Naive thymus-derived CD4-positive, alpha-beta T cell (primary cell): ENCODE measurements at regions of chr16 and their contacts with region 1.

Region 1: GRCh38 chr16:1610276-1611017 is 1.4 kb downstream of the IFT140 start:
- DNase-seq: peak; percentile 85 to 95 (median 91)
- ATAC-seq: peak; percentile 58
- H3K4me3 ChIP-seq: peak overlapping the region; percentile 60
- H3K4me3 Mint-ChIP-seq: peak overlapping the region; percentile 70 to 95 (median 84)
- H3K27ac ChIP-seq: peak overlapping the region; percentile 75
- H3K27ac Mint-ChIP-seq: peak overlapping the region; percentile 78 to 99 (median 97)
- H3K4me1 ChIP-seq: peaks cover 17 to 34% of the 10 kb centered on the region in 2 donors
- H3K4me1 Mint-ChIP-seq: peaks cover 13 to 30% (median 24%) of the 10 kb centered on the region in 7 donors
- H3K27me3 ChIP-seq: no peaks in the 10 kb centered on the region
- H3K27me3 Mint-ChIP-seq: peaks cover 0 to 4% (median 0%) of the 10 kb centered on the region in 5 donors

Region 2: DNA sequence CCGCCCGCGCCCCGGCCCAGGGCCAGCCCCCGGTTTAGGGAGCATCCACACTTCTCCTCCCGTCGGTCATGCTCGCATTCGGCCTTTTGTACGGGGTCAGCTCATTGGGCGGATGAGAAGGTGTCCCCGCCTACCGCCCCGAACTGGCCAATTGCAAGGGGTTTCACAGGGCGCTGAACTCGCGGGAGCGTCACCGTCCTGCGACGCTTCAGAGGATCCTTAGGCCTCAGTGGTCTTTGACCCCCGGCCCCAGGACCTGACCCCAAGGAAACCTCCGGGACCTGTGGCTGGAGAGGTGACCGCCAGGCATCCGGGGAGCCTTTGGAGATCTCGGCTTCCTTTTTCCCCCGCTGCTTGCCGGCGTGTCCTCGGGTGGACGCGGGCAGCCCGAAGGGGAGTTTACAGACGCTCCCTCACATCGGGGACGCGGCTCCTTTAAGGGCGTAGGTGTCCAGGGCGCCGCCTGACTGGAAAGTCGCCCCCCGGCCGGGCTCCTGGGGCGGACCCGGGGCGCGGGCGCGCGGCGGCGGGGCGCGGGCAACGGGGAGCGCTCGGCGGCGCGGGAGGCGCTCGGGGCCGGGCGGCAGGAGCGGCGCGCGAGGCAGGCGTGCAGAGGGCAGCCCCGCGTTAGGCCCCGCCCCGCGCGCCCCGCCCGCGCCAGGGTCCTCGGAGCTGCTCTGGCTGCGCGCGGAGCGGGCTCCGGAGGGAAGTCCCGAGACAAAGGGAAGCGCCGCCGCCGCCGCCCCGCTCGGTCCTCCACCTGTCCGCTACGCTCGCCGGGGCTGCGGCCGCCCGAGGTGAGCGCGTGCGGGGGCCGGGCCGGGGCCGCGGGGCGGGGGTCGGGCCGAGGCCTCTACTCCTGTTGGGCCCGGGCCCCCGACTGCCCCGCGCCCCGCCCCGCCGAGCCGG is 301.2 kb before region 1 on chr16 and contains the start of gene UBE2I:
- CTCF ChIA-PET with region 1: no interaction called
- POLR2A ChIA-PET with region 1: no interaction called
- intact Hi-C with region 1: loop called in 1 of 2 experiments (anchors 1 kb)
- DNase-seq: peak; percentile 95 to 100 (median 99)
- ATAC-seq: peak; percentile 85
- H3K4me3 ChIP-seq: peak within 1 kb of the TSS; percentile 95
- H3K4me3 Mint-ChIP-seq: peak within 1 kb of the TSS; percentile 92 to 100 (median 98)
- H3K27ac ChIP-seq: peak within 1 kb of the TSS; percentile 99
- H3K27ac Mint-ChIP-seq: peak within 1 kb of the TSS; percentile 97 to 100 (median 99)
- H3K4me1 ChIP-seq: peaks cover 27 to 33% of the 10 kb centered on the region in 2 donors
- H3K4me1 Mint-ChIP-seq: peaks cover 15 to 56% (median 34%) of the 10 kb centered on the region in 7 donors
- H3K27me3 ChIP-seq: no peaks in the 10 kb centered on the region
- H3K27me3 Mint-ChIP-seq: no peaks in the 10 kb centered on the region
- total RNA-seq, gene UBE2I: 159 to 277 (median 203) TPM

Region 3: GRCh38 chr16:1458336-1458976 is 152.0 kb before region 1 on chr16:
- CTCF ChIA-PET with region 1: no interaction called
- POLR2A ChIA-PET with region 1: no interaction called
- intact Hi-C with region 1: no loop called
- DNase-seq: peak in 1 of 9 donors; percentile 32
- ATAC-seq: peak; percentile 40
- H3K4me3 ChIP-seq: no peak overlapping the region
- H3K4me3 Mint-ChIP-seq: no peak overlapping the region
- H3K27ac ChIP-seq: no peak overlapping the region
- H3K27ac Mint-ChIP-seq: peak overlapping the region in 1 of 9 donors; percentile 32
- H3K4me1 ChIP-seq: no peaks in the 10 kb centered on the region
- H3K4me1 Mint-ChIP-seq: peaks cover 0 to 6% (median 0%) of the 10 kb centered on the region in 7 donors
- H3K27me3 ChIP-seq: no peaks in the 10 kb centered on the region
- H3K27me3 Mint-ChIP-seq: no peaks in the 10 kb centered on the region

Region 4: GRCh38 chr16:1474796-1475551 is 135.5 kb before region 1 on chr16 and contains the start of gene CLCN7:
- CTCF ChIA-PET with region 1: no interaction called
- POLR2A ChIA-PET with region 1: interaction called, 6 read pairs
- intact Hi-C with region 1: loop called (anchors 1 to 2 kb)
- DNase-seq: peak; percentile 79 to 95 (median 84)
- ATAC-seq: peak; percentile 91
- H3K4me3 ChIP-seq: peak within 1 kb of the TSS; percentile 67
- H3K4me3 Mint-ChIP-seq: peak within 1 kb of the TSS; percentile 80 to 90 (median 85)
- H3K27ac ChIP-seq: peak within 1 kb of the TSS; percentile 100
- H3K27ac Mint-ChIP-seq: peak within 1 kb of the TSS; percentile 77 to 95 (median 88)
- H3K4me1 ChIP-seq: peaks cover 13 to 20% of the 10 kb centered on the region in 2 donors
- H3K4me1 Mint-ChIP-seq: peaks cover 18 to 52% (median 42%) of the 10 kb centered on the region in 7 donors
- H3K27me3 ChIP-seq: no peaks in the 10 kb centered on the region
- H3K27me3 Mint-ChIP-seq: no peaks in the 10 kb centered on the region
- total RNA-seq, gene CLCN7: 74.8 to 140 (median 115) TPM

Region 5: GRCh38 chr16:1559446-1559975 is 50.9 kb before region 1 on chr16:
- CTCF ChIA-PET with region 1: interaction called, 3 read pairs
- POLR2A ChIA-PET with region 1: no interaction called
- intact Hi-C with region 1: loop called in 1 of 2 experiments (anchors 2 kb)
- DNase-seq: peak in 7 of 9 donors; percentile 34 to 65 (median 50)
- ATAC-seq: peak; percentile 77
- H3K4me3 ChIP-seq: no peak overlapping the region
- H3K4me3 Mint-ChIP-seq: peak overlapping the region; percentile 12 to 85 (median 68)
- H3K27ac ChIP-seq: peak overlapping the region; percentile 57
- H3K27ac Mint-ChIP-seq: peak overlapping the region; percentile 39 to 91 (median 84)
- H3K4me1 ChIP-seq: peaks cover 20 to 45% of the 10 kb centered on the region in 2 donors
- H3K4me1 Mint-ChIP-seq: peaks cover 19 to 50% (median 42%) of the 10 kb centered on the region in 7 donors
- H3K27me3 ChIP-seq: no peaks in the 10 kb centered on the region
- H3K27me3 Mint-ChIP-seq: no peaks in the 10 kb centered on the region

Region 6: GRCh38 chr16:1705688-1706385 is 95.4 kb after region 1 on chr16 and contains the start of gene MAPK8IP3:
- CTCF ChIA-PET with region 1: no interaction called
- POLR2A ChIA-PET with region 1: interaction called, 13 read pairs
- intact Hi-C with region 1: loop called (anchors 1 to 2 kb)
- DNase-seq: peak; percentile 85 to 100 (median 98)
- ATAC-seq: peak; percentile 93
- H3K4me3 ChIP-seq: peak within 1 kb of the TSS; percentile 98
- H3K4me3 Mint-ChIP-seq: peak within 1 kb of the TSS; percentile 95 to 100 (median 98)
- H3K27ac ChIP-seq: peak within 1 kb of the TSS; percentile 96
- H3K27ac Mint-ChIP-seq: peak within 1 kb of the TSS; percentile 95 to 99 (median 97)
- H3K4me1 ChIP-seq: peaks cover 18 to 25% of the 10 kb centered on the region in 2 donors
- H3K4me1 Mint-ChIP-seq: peaks cover 0 to 48% (median 32%) of the 10 kb centered on the region in 7 donors
- H3K27me3 ChIP-seq: no peaks in the 10 kb centered on the region
- H3K27me3 Mint-ChIP-seq: no peaks in the 10 kb centered on the region
- total RNA-seq, gene MAPK8IP3: 112 to 299 (median 272) TPM

Region 7: GRCh38 chr16:1763521-1764511 is 153.4 kb after region 1 on chr16:
- CTCF ChIA-PET with region 1: no interaction called
- POLR2A ChIA-PET with region 1: no interaction called
- intact Hi-C with region 1: no loop called
- DNase-seq: no peak
- ATAC-seq: no peak
- H3K4me3 ChIP-seq: no peak overlapping the region
- H3K4me3 Mint-ChIP-seq: no peak overlapping the region
- H3K27ac ChIP-seq: no peak overlapping the region
- H3K27ac Mint-ChIP-seq: no peak overlapping the region
- H3K4me1 ChIP-seq: no peaks in the 10 kb centered on the region
- H3K4me1 Mint-ChIP-seq: peaks cover 0 to 5% (median 0%) of the 10 kb centered on the region in 7 donors
- H3K27me3 ChIP-seq: no peaks in the 10 kb centered on the region
- H3K27me3 Mint-ChIP-seq: no peaks in the 10 kb centered on the region

Region 8: DNA sequence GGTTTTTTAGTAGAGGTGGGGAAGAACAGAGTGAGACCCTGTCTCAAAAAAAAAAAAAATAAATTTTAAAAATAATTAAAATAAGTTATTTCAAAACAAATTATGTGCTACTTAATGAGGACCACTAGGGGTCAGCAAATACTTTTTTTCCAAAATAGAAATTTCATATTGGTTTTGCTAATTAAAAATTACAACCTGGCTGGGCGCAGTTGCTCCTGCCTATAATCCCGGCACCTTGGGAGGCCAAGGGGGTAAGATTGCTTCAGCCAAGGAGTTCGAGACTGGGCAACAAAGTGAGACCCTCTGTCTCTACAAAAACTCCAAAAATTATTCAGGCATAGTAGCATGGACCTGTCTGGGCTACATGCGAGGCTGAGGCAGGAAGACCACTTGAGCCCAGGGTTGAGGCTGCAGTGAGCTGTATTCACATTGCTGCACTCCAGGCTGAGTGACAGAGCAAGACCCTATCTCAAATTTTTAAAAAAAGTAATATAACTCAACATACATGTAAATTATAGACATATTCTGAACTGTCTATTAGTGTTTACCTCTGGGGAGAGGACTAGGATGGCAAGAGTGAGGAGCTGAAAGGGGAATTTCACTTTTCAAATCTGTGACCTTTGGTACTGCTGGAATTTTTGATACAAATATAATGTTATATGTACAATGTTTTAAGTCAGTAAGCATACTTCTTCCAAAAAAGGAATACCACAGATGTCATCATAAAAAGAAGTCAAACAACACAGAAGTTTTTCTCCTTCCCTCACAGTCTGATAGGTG is 253.4 kb after region 1 on chr16:
- CTCF ChIA-PET with region 1: no interaction called
- POLR2A ChIA-PET with region 1: no interaction called
- intact Hi-C with region 1: no loop called
- DNase-seq: peak in 6 of 9 donors; percentile 21 to 43 (median 35)
- ATAC-seq: no peak
- H3K4me3 ChIP-seq: no peak overlapping the region
- H3K4me3 Mint-ChIP-seq: no peak overlapping the region
- H3K27ac ChIP-seq: no peak overlapping the region
- H3K27ac Mint-ChIP-seq: peak overlapping the region in 1 of 9 donors; percentile 14
- H3K4me1 ChIP-seq: no peaks in the 10 kb centered on the region
- H3K4me1 Mint-ChIP-seq: no peaks in the 10 kb centered on the region
- H3K27me3 ChIP-seq: no peaks in the 10 kb centered on the region
- H3K27me3 Mint-ChIP-seq: peaks cover 0 to 44% (median 9%) of the 10 kb centered on the region in 5 donors

Region 9: GRCh38 chr16:1942810-1943726 is 332.6 kb after region 1 on chr16 and contains the start of gene MSRB1:
- CTCF ChIA-PET with region 1: no interaction called
- POLR2A ChIA-PET with region 1: no interaction called
- intact Hi-C with region 1: loop called in 1 of 2 experiments (anchors 5 kb)
- DNase-seq: peak; percentile 97 to 100 (median 98)
- ATAC-seq: peak; percentile 100
- H3K4me3 ChIP-seq: peak within 1 kb of the TSS; percentile 90
- H3K4me3 Mint-ChIP-seq: peak within 1 kb of the TSS; percentile 74 to 90 (median 87)
- H3K27ac ChIP-seq: peak within 1 kb of the TSS; percentile 76
- H3K27ac Mint-ChIP-seq: peak within 1 kb of the TSS; percentile 41 to 90 (median 65)
- H3K4me1 ChIP-seq: peaks cover 6 to 7% of the 10 kb centered on the region in 2 donors
- H3K4me1 Mint-ChIP-seq: peaks cover 4 to 24% (median 11%) of the 10 kb centered on the region in 7 donors
- H3K27me3 ChIP-seq: no peaks in the 10 kb centered on the region
- H3K27me3 Mint-ChIP-seq: no peaks in the 10 kb centered on the region
- total RNA-seq, gene MSRB1: 5.5 to 27.0 (median 8.2) TPM

Region 10: GRCh38 chr16:3509470-3509928 is 1899.1 kb after region 1 on chr16:
- CTCF ChIA-PET with region 1: no interaction called
- POLR2A ChIA-PET with region 1: no interaction called
- intact Hi-C with region 1: loop called in 1 of 2 experiments (anchors 10 kb)
- DNase-seq: peak; percentile 41 to 84 (median 80)
- ATAC-seq: peak; percentile 99
- H3K4me3 ChIP-seq: peak overlapping the region; percentile 13
- H3K4me3 Mint-ChIP-seq: peak overlapping the region in 9 of 10 donors; percentile 21 to 75 (median 68)
- H3K27ac ChIP-seq: peak overlapping the region; percentile 73
- H3K27ac Mint-ChIP-seq: peak overlapping the region; percentile 84 to 98 (median 89)
- H3K4me1 ChIP-seq: peaks cover 23 to 44% of the 10 kb centered on the region in 2 donors
- H3K4me1 Mint-ChIP-seq: peaks cover 33 to 72% (median 62%) of the 10 kb centered on the region in 7 donors
- H3K27me3 ChIP-seq: no peaks in the 10 kb centered on the region
- H3K27me3 Mint-ChIP-seq: no peaks in the 10 kb centered on the region